ENCODE measurements at regions of chr1 and their contacts with region 1.

Region 1: GRCh38 chr1:200409761-200410565 is at the start of gene ZNF281:
- DNase-seq: peak; percentile 91 to 98 (median 95)
- ATAC-seq: peak; percentile 95
- H3K4me3 ChIP-seq: peak within 1 kb of the TSS; percentile 78 to 95
- H3K4me3 Mint-ChIP-seq: peak within 1 kb of the TSS; percentile 99
- H3K27ac ChIP-seq: peak within 1 kb of the TSS; percentile 71 to 76
- H3K27ac Mint-ChIP-seq: peak within 1 kb of the TSS; percentile 98
- H3K4me1 ChIP-seq: peaks cover 47% of the 10 kb centered on the region
- H3K4me1 Mint-ChIP-seq: peaks cover 52% of the 10 kb centered on the region
- H3K27me3 ChIP-seq: no peaks in the 10 kb centered on the region
- H3K27me3 Mint-ChIP-seq: no peaks in the 10 kb centered on the region
- CTCF ChIP-seq: no peak
- total RNA-seq, gene ZNF281: 31.0 to 32.9 TPM

Region 2: GRCh38 chr1:200351826-200352549 is 58.0 kb before region 1 on chr1:
- CTCF ChIA-PET with region 1: no interaction called
- POLR2A ChIA-PET with region 1: no interaction called
- intact Hi-C with region 1: loop called in 1 of 2 experiments (anchors 5 kb)
- DNase-seq: peak in 4 of 9 experiments; percentile 8 to 58 (median 30)
- ATAC-seq: peak; percentile 75
- H3K4me3 ChIP-seq: peak overlapping the region; percentile 4 to 17
- H3K4me3 Mint-ChIP-seq: peak overlapping the region; percentile 75
- H3K27ac ChIP-seq: peak overlapping the region in 1 of 2 experiments; percentile 53
- H3K27ac Mint-ChIP-seq: peak overlapping the region; percentile 91
- H3K4me1 ChIP-seq: peaks cover 19% of the 10 kb centered on the region
- H3K4me1 Mint-ChIP-seq: peaks cover 23% of the 10 kb centered on the region
- H3K27me3 ChIP-seq: no peaks in the 10 kb centered on the region
- H3K27me3 Mint-ChIP-seq: no peaks in the 10 kb centered on the region
- CTCF ChIP-seq: no peak

Region 3: DNA sequence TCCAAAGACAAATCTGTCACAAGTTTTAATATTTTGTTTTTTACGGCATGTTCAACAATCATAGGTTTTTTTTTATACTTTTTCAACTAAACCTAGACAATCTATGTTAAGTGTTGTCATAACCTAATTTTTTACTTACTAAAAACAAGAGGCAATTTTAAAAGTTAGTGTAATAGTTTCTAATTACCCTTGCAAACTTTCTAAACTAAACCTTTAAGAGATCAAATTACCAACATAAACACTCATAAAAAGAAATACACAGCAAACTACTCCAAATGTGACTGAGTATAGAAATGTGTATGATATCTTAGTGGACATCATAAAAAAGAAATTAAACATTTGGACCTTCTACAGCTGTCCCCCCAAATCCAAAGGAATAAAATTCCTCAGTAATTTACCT is 10.1 kb before region 1 on chr1:
- CTCF ChIA-PET with region 1: no interaction called
- POLR2A ChIA-PET with region 1: interaction called, 5 read pairs
- intact Hi-C with region 1: loop called in 1 of 2 experiments (anchors 1 kb)
- DNase-seq: no peak
- ATAC-seq: no peak
- H3K4me3 ChIP-seq: no peak overlapping the region
- H3K4me3 Mint-ChIP-seq: no peak overlapping the region
- H3K27ac ChIP-seq: no peak overlapping the region
- H3K27ac Mint-ChIP-seq: no peak overlapping the region
- H3K4me1 ChIP-seq: no peaks in the 10 kb centered on the region
- H3K4me1 Mint-ChIP-seq: peaks cover 43% of the 10 kb centered on the region
- H3K27me3 ChIP-seq: no peaks in the 10 kb centered on the region
- H3K27me3 Mint-ChIP-seq: no peaks in the 10 kb centered on the region
- CTCF ChIP-seq: no peak

Region 4: GRCh38 chr1:200669314-200670241 is 259.6 kb after region 1 on chr1 and contains the start of gene DDX59:
- CTCF ChIA-PET with region 1: no interaction called
- POLR2A ChIA-PET with region 1: no interaction called
- intact Hi-C with region 1: loop called in 1 of 2 experiments (anchors 5 kb)
- DNase-seq: peak; percentile 67 to 93 (median 89)
- ATAC-seq: peak; percentile 89
- H3K4me3 ChIP-seq: peak within 1 kb of the TSS; percentile 82 to 94
- H3K4me3 Mint-ChIP-seq: peak within 1 kb of the TSS; percentile 94
- H3K27ac ChIP-seq: peak within 1 kb of the TSS; percentile 95 to 98
- H3K27ac Mint-ChIP-seq: peak within 1 kb of the TSS; percentile 94
- H3K4me1 ChIP-seq: peaks cover 21% of the 10 kb centered on the region
- H3K4me1 Mint-ChIP-seq: peaks cover 42% of the 10 kb centered on the region
- H3K27me3 ChIP-seq: no peaks in the 10 kb centered on the region
- H3K27me3 Mint-ChIP-seq: no peaks in the 10 kb centered on the region
- CTCF ChIP-seq: no peak
- total RNA-seq, gene DDX59: 24.0 to 32.9 TPM

Region 5: GRCh38 chr1:200738740-200739498 is 329.0 kb after region 1 on chr1 and contains the start of gene CAMSAP2:
- CTCF ChIA-PET with region 1: no interaction called
- POLR2A ChIA-PET with region 1: no interaction called
- intact Hi-C with region 1: loop called in 1 of 2 experiments (anchors 10 kb)
- DNase-seq: peak; percentile 16 to 78 (median 63)
- ATAC-seq: peak; percentile 68
- H3K4me3 ChIP-seq: peak within 1 kb of the TSS; percentile 82 to 84
- H3K4me3 Mint-ChIP-seq: peak within 1 kb of the TSS; percentile 93
- H3K27ac ChIP-seq: peak within 1 kb of the TSS; percentile 28 to 41
- H3K27ac Mint-ChIP-seq: peak within 1 kb of the TSS; percentile 84
- H3K4me1 ChIP-seq: peaks cover 25% of the 10 kb centered on the region
- H3K4me1 Mint-ChIP-seq: peaks cover 31% of the 10 kb centered on the region
- H3K27me3 ChIP-seq: peaks cover 0 to 4% of the 10 kb centered on the region in 2 experiments
- H3K27me3 Mint-ChIP-seq: no peaks in the 10 kb centered on the region
- CTCF ChIP-seq: no peak
- total RNA-seq, gene CAMSAP2: 1.7 to 2.2 TPM

Measured in CD8-positive, alpha-beta T cell (primary cell).